MCF 10A (cell line): ENCODE measurements at regions of chr21 and their contacts with region 1.

Region 1: DNA sequence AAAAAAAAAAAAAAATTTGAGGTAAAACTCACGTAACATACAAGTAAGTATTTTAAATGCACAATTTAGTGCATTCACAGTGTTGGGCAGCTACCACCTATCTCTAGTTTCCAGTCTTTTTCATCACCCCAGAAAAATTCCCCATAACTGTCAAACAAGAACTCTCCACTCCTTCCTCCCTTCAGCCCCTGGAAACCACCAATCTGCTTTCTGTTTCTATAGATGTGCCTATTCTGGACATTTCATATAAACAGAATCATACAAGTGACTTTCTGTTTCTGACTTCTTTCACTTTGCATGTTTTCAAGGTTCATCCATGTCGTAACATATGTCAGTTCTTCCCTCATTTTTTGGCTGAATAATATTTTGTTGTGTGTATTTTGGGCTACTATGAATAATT is 24.9 kb upstream of the ETS2 start:
- DNase-seq: no peak
- H3K4me3 Mint-ChIP-seq: no peak overlapping the region
- H3K27ac Mint-ChIP-seq: peak overlapping the region; percentile 87
- H3K4me1 Mint-ChIP-seq: peaks cover 24% of the 10 kb centered on the region
- H3K27me3 Mint-ChIP-seq: no peaks in the 10 kb centered on the region
- CTCF ChIP-seq: no peak

Region 2: GRCh38 chr21:38323721-38324531 is 457.0 kb before region 1 on chr21:
- CTCF ChIA-PET with region 1: no interaction called
- POLR2A ChIA-PET with region 1: no interaction called
- intact Hi-C with region 1: no loop called
- DNase-seq: peak; percentile 87
- H3K4me3 Mint-ChIP-seq: no peak overlapping the region
- H3K27ac Mint-ChIP-seq: no peak overlapping the region
- H3K4me1 Mint-ChIP-seq: peaks cover 24% of the 10 kb centered on the region
- H3K27me3 Mint-ChIP-seq: no peaks in the 10 kb centered on the region
- CTCF ChIP-seq: no peak

Region 3: GRCh38 chr21:38544661-38545060 is 236.2 kb before region 1 on chr21:
- CTCF ChIA-PET with region 1: no interaction called
- POLR2A ChIA-PET with region 1: no interaction called
- intact Hi-C with region 1: no loop called
- DNase-seq: peak; percentile 14
- H3K4me3 Mint-ChIP-seq: no peak overlapping the region
- H3K27ac Mint-ChIP-seq: no peak overlapping the region
- H3K4me1 Mint-ChIP-seq: no peaks in the 10 kb centered on the region
- H3K27me3 Mint-ChIP-seq: peaks cover under 1% of the 10 kb centered on the region
- CTCF ChIP-seq: no peak

Region 4: GRCh38 chr21:38766987-38767722 is 13.7 kb before region 1 on chr21:
- CTCF ChIA-PET with region 1: interaction called, 3 read pairs
- POLR2A ChIA-PET with region 1: interaction called, 12 read pairs
- intact Hi-C with region 1: no loop called
- DNase-seq: peak; percentile 34
- H3K4me3 Mint-ChIP-seq: peak overlapping the region; percentile 43
- H3K27ac Mint-ChIP-seq: peak overlapping the region; percentile 97
- H3K4me1 Mint-ChIP-seq: peaks cover 16% of the 10 kb centered on the region
- H3K27me3 Mint-ChIP-seq: no peaks in the 10 kb centered on the region
- CTCF ChIP-seq: no peak

Region 5: DNA sequence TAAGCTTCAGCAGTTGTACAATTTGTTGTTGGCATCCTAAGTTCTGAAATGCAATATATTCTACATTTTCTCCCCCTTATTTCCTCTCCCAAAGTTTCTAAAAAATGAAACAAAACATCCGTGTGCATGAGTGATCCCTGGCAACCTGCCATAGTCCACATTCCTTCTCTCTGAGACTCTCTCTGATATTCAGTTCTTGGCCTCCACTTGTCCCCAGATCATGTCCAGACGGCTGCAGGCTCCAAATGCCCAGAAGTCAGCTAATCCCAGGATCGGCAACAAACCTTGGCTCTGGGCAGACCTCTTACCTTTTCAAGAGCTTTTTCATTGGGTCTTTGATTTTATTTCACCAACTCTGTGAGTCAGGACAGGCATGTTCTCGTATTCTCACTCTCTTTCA is 212.7 kb after region 1 on chr21:
- CTCF ChIA-PET with region 1: no interaction called
- POLR2A ChIA-PET with region 1: no interaction called
- intact Hi-C with region 1: no loop called
- DNase-seq: peak; percentile 95
- H3K4me3 Mint-ChIP-seq: peak overlapping the region; percentile 11
- H3K27ac Mint-ChIP-seq: peak overlapping the region; percentile 94
- H3K4me1 Mint-ChIP-seq: peaks cover 34% of the 10 kb centered on the region
- H3K27me3 Mint-ChIP-seq: no peaks in the 10 kb centered on the region
- CTCF ChIP-seq: no peak